AG04449 (cell line): ENCODE measurements at regions of chr18 and their contacts with region 1.

Region 1: GRCh38 chr18:51051105-51051712 is 21.2 kb downstream of the SMAD4 start:
- DNase-seq: no peak
- H3K4me3 ChIP-seq: no peak overlapping the region
- CTCF ChIP-seq: peak; percentile 67

Region 2: GRCh38 chr18:50819728-50820378 is 231.4 kb before region 1 on chr18 and contains the start of gene MRO:
- CTCF ChIA-PET with region 1: interaction called, 43 read pairs
- POLR2A ChIA-PET with region 1: no interaction called
- DNase-seq: peak; percentile 5
- H3K4me3 ChIP-seq: peak within 1 kb of the TSS; percentile 52
- CTCF ChIP-seq: peak; percentile 96

Region 3: DNA sequence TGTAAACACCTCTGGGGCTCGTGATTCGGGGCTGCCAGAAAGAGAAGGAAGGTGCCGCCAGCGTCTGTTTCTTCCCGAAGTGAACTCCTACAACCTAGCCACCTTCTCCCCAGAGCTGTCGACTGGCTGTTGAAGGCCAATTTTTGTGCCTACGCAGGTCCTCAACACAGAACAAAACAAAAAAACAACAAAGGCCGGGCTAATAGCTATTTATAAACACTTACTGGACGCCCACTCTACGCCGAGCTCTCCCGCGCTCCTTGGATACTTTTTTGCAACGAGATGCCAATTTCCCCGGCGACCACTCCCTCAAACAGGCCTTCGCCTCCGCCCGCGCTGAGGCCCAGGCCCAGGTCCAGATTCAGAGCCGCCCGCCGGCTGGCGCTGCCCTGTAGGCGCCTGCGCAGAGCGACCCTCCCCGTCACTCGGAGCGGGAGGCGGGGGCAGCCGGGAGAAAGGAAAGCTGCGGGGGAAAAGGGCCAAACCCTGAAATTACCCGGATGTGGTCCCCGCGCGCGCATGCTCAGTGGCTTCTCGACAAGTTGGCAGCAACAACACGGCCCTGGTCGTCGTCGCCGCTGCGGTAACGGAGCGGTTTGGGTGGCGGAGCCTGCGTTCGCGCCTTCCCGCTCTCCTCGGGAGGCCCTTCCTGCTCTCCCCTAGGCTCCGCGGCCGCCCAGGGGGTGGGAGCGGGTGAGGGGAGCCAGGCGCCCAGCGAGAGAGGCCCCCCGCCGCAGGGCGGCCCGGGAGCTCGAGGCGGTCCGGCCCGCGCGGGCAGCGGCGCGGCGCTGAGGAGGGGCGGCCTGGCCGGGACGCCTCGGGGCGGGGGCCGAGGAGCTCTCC is 21.3 kb before region 1 on chr18 and contains the start of gene SMAD4:
- CTCF ChIA-PET with region 1: interaction called, 32 read pairs
- POLR2A ChIA-PET with region 1: no interaction called
- DNase-seq: peak; percentile 65
- H3K4me3 ChIP-seq: peak within 1 kb of the TSS; percentile 84
- CTCF ChIP-seq: no peak

Region 4: DNA sequence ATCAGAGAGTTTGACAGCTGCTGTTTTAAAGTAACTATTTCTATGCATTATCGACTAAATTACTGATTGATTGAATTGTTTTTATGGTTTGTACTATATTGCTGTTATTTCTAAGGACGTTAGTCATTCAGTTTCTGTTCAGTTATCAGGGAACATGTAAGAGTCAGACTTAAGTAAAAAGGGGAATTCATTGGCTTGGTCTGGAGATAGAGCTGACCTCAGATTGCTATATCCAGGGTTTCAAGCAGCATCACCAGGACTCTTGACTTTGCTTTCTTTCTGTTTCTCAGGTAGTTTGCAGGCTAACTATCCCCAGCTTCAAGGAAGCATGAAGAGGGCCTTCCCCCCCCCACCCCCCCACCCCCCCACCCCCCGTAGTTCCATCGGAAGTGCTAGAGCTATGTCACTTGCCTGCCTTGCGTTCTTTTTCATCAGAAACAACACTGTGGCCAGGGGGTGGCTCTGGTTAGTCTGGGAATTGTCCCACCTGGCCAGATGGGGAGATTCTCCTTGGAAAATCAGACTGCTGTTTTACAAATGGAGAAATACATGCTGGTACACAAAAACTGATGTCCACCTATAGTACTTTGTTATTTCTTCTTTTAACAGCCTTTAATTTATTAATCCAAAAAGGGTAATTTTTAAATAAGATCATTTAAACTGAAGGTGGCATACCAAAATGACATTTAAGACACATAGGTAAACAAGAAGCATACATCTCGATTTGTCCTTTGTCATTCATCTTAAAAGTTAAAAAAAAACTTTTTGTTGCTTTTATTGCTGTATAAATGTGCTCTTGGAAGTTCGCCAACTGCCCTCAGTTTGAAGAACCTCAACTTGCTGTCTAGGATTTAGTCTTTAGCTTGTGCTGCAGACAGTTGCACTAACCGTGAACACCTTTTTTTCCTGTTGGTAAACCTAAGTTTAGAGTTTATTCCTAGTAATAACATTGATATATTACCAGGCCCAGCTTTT is 11.8 kb before region 1 on chr18:
- CTCF ChIA-PET with region 1: interaction called, 54 read pairs
- POLR2A ChIA-PET with region 1: interaction called, 3 read pairs
- DNase-seq: no peak
- H3K4me3 ChIP-seq: no peak overlapping the region
- CTCF ChIP-seq: no peak

Region 5: GRCh38 chr18:51066273-51066672 is 15.1 kb after region 1 on chr18:
- CTCF ChIA-PET with region 1: interaction called, 24 read pairs
- POLR2A ChIA-PET with region 1: no interaction called
- DNase-seq: no peak
- H3K4me3 ChIP-seq: no peak overlapping the region
- CTCF ChIP-seq: no peak